Left cardiac atrium (tissue), 4 donors: ENCODE measurements at regions of chr4 and their contacts with region 1.

Region 1: GRCh38 chr4:2468445-2469192 is at the start of gene RNF4:
- DNase-seq: peak; percentile 97
- ATAC-seq: peak; percentile 97
- total RNA-seq, gene RNF4: 22.5 to 37.0 TPM

Region 2: GRCh38 chr4:2536193-2537010 is 67.8 kb after region 1 on chr4 and contains the start of gene FAM193A:
- intact Hi-C with region 1: loop called in 1 of 2 experiments (anchors 10 kb)
- DNase-seq: peak; percentile 99
- ATAC-seq: peak; percentile 97 to 98
- total RNA-seq, gene FAM193A: 15.1 to 16.6 TPM